Posterior cingulate gyrus (tissue), 11 donors: ENCODE measurements at regions of chr1 and their contacts with region 1.

Region 1: DNA sequence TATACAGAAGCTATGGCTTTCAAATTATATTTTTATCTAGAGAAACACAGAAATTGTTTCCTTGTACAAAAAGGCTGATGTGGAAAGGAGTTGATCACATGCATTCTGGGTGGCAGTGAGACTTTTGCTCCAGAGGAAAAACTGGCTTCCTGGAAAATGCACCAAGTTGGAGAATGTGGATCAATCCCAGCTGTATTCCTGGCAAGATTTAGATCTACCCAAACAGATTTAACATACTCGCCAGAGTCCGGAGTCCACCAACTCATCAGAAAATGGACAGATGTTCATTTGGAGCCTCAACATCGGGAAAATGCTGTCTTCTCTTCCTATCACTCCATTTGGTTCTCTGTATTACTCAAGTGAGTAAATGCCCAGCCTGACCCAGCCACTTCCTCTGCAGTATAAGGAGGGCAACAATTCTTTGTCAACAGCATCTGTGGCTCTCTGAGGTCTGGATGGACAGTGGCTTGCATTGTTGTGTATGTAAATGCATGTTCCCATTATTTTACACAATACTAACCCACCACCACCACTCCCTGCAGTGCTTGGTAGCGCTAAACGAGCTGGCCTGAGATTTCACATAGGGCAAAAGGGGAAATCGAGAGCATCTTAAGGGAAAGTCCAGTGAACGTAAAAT is 226.2 kb upstream of the IRF2BP2 start:
- DNase-seq: peak in 6 of 10 donors; percentile 22 to 90 (median 48)

Region 2: DNA sequence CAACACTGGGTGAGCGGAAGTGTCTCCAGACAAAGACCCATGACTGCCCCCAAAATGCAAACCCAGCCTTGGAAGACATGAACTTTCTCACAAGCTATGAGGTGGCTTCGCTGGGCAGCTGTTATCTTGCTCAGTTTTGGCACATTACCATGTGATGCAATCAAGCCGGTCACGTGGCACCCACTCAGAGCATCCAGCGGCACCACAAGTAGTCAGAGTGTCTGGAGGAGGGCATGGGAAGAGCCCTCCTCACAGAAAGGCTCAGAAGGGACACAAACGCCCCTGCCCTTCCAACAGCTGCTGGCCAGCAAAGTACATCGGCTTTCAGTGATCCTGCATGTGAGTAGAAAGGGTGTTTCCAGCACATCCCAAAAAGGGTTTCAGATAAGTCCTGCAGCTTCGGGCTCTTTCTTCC is 80.7 kb before region 1 on chr1:
- intact Hi-C with region 1: loop called (anchors 5 kb)
- DNase-seq: peak; percentile 54 to 97 (median 80)

Region 3: DNA sequence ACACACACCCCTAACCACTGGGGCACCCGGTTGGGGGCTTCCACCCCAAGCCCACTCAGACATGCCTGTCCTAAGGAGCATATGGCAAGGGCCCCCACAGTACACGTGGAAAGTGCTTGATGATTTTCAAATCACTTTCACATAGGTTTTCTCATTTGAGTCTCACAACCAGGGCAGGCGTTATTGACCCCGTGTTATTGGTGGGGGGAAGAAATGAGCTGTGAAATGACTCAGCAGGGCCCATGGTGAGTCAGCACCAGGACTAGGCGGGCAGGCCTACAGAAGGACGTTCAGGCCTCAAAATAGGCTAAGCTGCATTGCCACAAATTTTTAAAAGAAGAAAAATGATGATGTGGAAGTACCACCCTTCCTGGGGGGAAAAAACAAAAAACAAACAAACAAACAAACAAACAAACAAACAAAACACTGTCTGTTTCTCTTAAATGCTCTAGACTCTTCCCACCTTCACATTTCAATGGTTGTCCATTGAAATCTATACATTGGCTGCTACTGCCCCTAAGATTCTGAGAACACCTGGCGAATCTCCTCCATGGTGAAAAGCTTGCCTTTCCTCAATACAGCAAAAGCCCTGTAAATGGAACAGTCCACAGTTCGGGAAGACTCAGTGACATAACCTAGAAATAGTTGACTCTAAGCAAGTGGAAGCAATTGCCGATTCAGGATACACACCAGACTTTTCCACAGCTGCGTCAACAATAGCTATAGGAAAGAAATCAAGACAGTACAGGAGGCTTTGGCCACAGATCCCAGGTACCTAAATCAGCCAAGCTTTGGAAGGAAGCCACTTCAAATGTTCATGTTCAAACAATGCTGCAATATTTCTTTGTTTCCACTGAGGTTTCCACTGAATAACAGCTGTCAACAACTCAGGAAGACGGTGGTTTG is 57.8 kb after region 1 on chr1:
- intact Hi-C with region 1: no loop called
- DNase-seq: no peak